Naive thymus-derived CD4-positive, alpha-beta T cell (primary cell): ENCODE measurements at regions of chr15 and their contacts with region 1.

Region 1: DNA sequence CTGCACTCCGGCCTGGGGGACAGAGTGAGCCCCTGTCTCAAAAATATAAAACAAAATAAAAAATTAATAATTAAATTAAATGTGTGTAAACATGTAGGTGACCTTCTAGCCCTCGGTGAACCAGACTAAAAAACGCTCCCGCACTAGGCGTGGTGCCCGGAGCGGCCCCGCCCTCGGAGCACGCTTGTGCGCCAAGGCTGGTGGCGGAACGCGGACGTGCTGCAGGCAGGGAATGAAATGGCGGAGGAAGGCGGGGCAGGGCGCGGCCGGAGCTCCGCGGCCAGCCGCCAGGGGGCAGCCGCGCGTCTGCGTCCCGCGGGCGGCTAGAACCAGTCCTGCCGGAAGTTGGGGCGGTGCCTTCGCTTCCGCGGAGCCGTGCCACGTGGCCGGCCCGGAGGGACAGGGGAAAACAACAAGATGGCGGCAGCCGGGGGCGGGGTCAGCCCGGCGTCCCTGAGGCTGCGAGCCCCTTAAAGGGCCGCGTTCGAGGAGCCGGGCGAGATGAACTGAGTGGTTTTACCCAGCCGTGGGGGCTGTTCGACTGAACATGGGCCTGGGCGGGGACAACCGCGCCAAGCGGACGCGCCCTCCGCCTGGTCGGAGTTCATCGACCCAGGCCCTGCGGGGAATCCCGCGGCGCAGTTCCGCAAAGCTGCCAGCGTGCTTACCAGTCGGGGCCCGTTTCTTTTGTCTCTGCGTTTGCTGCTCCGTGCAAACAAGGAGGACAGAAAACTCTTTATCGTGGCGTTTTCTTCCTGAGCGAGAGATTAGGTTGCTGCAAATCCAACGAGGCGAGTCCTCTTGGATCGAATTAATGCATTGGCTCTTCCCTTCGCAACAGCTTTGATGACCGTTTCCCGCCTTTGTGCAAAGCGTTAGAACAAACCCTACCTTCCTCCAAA is 90.9 kb upstream of the CHD2 start:
- DNase-seq: peak; percentile 97 to 100 (median 99)
- ATAC-seq: peak; percentile 87
- H3K4me3 ChIP-seq: peak overlapping the region; percentile 86
- H3K4me3 Mint-ChIP-seq: peak overlapping the region; percentile 86 to 96 (median 92)
- H3K27ac ChIP-seq: peak overlapping the region; percentile 99
- H3K27ac Mint-ChIP-seq: peak overlapping the region; percentile 94 to 100 (median 99)
- H3K4me1 ChIP-seq: peaks cover 12 to 43% of the 10 kb centered on the region in 2 donors
- H3K4me1 Mint-ChIP-seq: peaks cover 24 to 61% (median 54%) of the 10 kb centered on the region in 7 donors
- H3K27me3 ChIP-seq: no peaks in the 10 kb centered on the region
- H3K27me3 Mint-ChIP-seq: peaks cover 0 to 1% (median 0%) of the 10 kb centered on the region in 5 donors

Region 2: GRCh38 chr15:92820236-92821021 is 11.2 kb after region 1 on chr15:
- CTCF ChIA-PET with region 1: interaction called, 14 read pairs
- POLR2A ChIA-PET with region 1: interaction called, 213 read pairs
- intact Hi-C with region 1: loop called (anchors 1 kb)
- DNase-seq: peak; percentile 74 to 90 (median 86)
- ATAC-seq: peak; percentile 95
- H3K4me3 ChIP-seq: peak overlapping the region; percentile 76
- H3K4me3 Mint-ChIP-seq: peak overlapping the region; percentile 63 to 93 (median 88)
- H3K27ac ChIP-seq: peak overlapping the region; percentile 86
- H3K27ac Mint-ChIP-seq: peak overlapping the region; percentile 78 to 98 (median 91)
- H3K4me1 ChIP-seq: peaks cover 16 to 47% of the 10 kb centered on the region in 2 donors
- H3K4me1 Mint-ChIP-seq: peaks cover 25 to 74% (median 70%) of the 10 kb centered on the region in 7 donors
- H3K27me3 ChIP-seq: no peaks in the 10 kb centered on the region
- H3K27me3 Mint-ChIP-seq: no peaks in the 10 kb centered on the region

Region 3: GRCh38 chr15:92839696-92840095 is 30.5 kb after region 1 on chr15:
- CTCF ChIA-PET with region 1: interaction called, 3 read pairs
- POLR2A ChIA-PET with region 1: interaction called, 193 read pairs
- intact Hi-C with region 1: no loop called
- DNase-seq: no peak
- ATAC-seq: no peak
- H3K4me3 ChIP-seq: peak overlapping the region; percentile 1
- H3K4me3 Mint-ChIP-seq: peak overlapping the region; percentile 52 to 77 (median 70)
- H3K27ac ChIP-seq: peak overlapping the region; percentile 61
- H3K27ac Mint-ChIP-seq: peak overlapping the region; percentile 67 to 92 (median 90)
- H3K4me1 ChIP-seq: peaks cover 8 to 49% of the 10 kb centered on the region in 2 donors
- H3K4me1 Mint-ChIP-seq: peaks cover 23 to 75% (median 63%) of the 10 kb centered on the region in 7 donors
- H3K27me3 ChIP-seq: no peaks in the 10 kb centered on the region
- H3K27me3 Mint-ChIP-seq: no peaks in the 10 kb centered on the region

Region 4: DNA sequence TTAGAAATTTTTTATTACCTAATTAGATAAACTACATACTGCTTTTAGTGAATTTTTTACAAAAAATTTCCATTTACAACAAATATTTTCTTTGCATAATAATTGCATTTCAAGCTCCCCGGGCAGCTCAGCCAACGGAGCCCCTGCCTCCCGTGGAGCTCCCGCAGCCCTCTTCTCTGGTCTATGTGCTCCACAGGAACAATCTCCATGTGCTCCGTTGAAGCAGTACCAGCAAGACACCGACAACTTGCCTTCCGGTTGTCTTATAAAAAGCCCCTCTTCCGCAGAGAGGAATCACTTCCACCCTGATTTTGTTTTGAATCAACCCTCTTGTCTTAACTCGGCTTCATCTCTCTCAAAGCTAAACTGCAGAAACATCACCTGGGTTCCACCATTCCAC is 44.0 kb after region 1 on chr15:
- CTCF ChIA-PET with region 1: interaction called, 4 read pairs
- POLR2A ChIA-PET with region 1: interaction called, 26 read pairs
- intact Hi-C with region 1: loop called in 1 of 2 experiments (anchors 1 kb)
- DNase-seq: no peak
- ATAC-seq: no peak
- H3K4me3 ChIP-seq: no peak overlapping the region
- H3K4me3 Mint-ChIP-seq: peak overlapping the region in 6 of 10 donors; percentile 22 to 78 (median 50)
- H3K27ac ChIP-seq: no peak overlapping the region
- H3K27ac Mint-ChIP-seq: peak overlapping the region in 5 of 9 donors; percentile 3 to 93 (median 59)
- H3K4me1 ChIP-seq: peaks cover 6 to 39% of the 10 kb centered on the region in 2 donors
- H3K4me1 Mint-ChIP-seq: peaks cover 18 to 54% (median 41%) of the 10 kb centered on the region in 7 donors
- H3K27me3 ChIP-seq: no peaks in the 10 kb centered on the region
- H3K27me3 Mint-ChIP-seq: no peaks in the 10 kb centered on the region

Region 5: GRCh38 chr15:92889390-92890107 is 80.3 kb after region 1 on chr15:
- CTCF ChIA-PET with region 1: interaction called, 44 read pairs
- POLR2A ChIA-PET with region 1: interaction called, 629 read pairs
- intact Hi-C with region 1: no loop called
- DNase-seq: peak in 1 of 9 donors; percentile 7
- ATAC-seq: peak; percentile 33
- H3K4me3 ChIP-seq: no peak overlapping the region
- H3K4me3 Mint-ChIP-seq: peak overlapping the region; percentile 56 to 84 (median 73)
- H3K27ac ChIP-seq: peak overlapping the region; percentile 61
- H3K27ac Mint-ChIP-seq: peak overlapping the region; percentile 78 to 92 (median 85)
- H3K4me1 ChIP-seq: peaks cover 60 to 66% of the 10 kb centered on the region in 2 donors
- H3K4me1 Mint-ChIP-seq: peaks cover 47 to 92% (median 75%) of the 10 kb centered on the region in 7 donors
- H3K27me3 ChIP-seq: no peaks in the 10 kb centered on the region
- H3K27me3 Mint-ChIP-seq: no peaks in the 10 kb centered on the region

Region 6: DNA sequence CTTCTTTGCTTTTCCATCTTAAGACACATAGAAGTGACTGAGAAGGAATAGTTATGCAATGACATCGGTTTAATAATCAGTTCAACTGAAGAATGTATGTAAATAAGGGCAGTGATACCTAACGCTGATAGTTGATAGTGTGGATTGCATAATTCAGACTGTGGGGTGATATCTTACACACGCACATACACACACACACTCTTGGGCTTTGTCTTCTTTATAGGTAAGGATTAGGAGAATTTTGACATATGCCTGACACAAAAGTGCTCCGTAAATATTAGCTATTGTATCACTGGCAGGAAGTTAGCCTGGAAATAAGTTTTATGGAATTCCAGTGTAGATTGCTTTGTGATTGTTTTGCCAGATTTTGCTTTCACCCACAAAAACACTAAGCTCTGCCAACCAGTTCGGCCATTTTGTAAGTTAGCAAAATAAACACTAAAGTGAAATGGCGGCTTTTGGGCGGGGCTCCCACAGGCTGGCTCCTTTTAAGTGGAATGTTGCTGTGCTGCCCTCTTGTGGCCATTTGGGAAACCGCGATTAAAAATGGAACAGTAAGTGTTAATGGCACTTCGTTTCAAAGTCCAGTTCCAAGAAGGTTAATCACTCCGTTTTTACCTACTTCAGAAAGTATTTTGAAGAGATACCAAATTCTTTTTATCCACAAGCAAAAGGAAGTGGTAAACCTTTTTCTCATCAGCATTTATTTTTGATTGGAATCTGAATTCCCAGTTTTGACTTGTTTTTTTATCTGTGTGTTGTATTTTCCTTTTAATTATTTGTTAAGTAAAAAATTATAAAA is 108.6 kb after region 1 on chr15:
- CTCF ChIA-PET with region 1: interaction called, 70 read pairs
- POLR2A ChIA-PET with region 1: interaction called, 184 read pairs
- intact Hi-C with region 1: loop called (anchors 1 kb)
- DNase-seq: peak; percentile 74 to 91 (median 89)
- ATAC-seq: peak; percentile 78
- H3K4me3 ChIP-seq: peak overlapping the region; percentile 5
- H3K4me3 Mint-ChIP-seq: peak overlapping the region; percentile 43 to 81 (median 70)
- H3K27ac ChIP-seq: peak overlapping the region; percentile 92
- H3K27ac Mint-ChIP-seq: peak overlapping the region; percentile 82 to 100 (median 96)
- H3K4me1 ChIP-seq: peaks cover 64 to 76% of the 10 kb centered on the region in 2 donors
- H3K4me1 Mint-ChIP-seq: peaks cover 53 to 92% (median 86%) of the 10 kb centered on the region in 7 donors
- H3K27me3 ChIP-seq: no peaks in the 10 kb centered on the region
- H3K27me3 Mint-ChIP-seq: no peaks in the 10 kb centered on the region